ENCODE measurements at regions of chr4 and their contacts with region 1.

Region 1: GRCh38 chr4:41257257-41257901 is 651 bp downstream of the UCHL1 start:
- DNase-seq: peak; percentile 85
- H3K4me3 ChIP-seq: peak overlapping the region; percentile 77 to 97
- H3K27ac ChIP-seq: peak overlapping the region; percentile 73 to 95; a peak in 3 of 4 replicates
- H3K4me1 ChIP-seq: peaks cover 10 to 16% of the 10 kb centered on the region in 2 experiments; a peak in 3 of 4 replicates
- H3K27me3 ChIP-seq: no peaks in the 10 kb centered on the region
- CTCF ChIP-seq: no peak
- EP300 ChIP-seq: no peak
- RAD21 ChIP-seq: no peak

Region 2: GRCh38 chr4:40924096-40924792 is 333.1 kb before region 1 on chr4:
- CTCF ChIA-PET with region 1: interaction called, 12 read pairs
- POLR2A ChIA-PET with region 1: interaction called, 3 read pairs
- DNase-seq: peak; percentile 83
- H3K4me3 ChIP-seq: peak overlapping the region in 1 of 2 experiments; percentile 10; a peak in 1 of 4 replicates
- H3K27ac ChIP-seq: no peak overlapping the region
- H3K4me1 ChIP-seq: no peaks in the 10 kb centered on the region; a peak in 1 of 4 replicates
- H3K27me3 ChIP-seq: no peaks in the 10 kb centered on the region
- CTCF ChIP-seq: peak; percentile 94
- EP300 ChIP-seq: no peak
- RAD21 ChIP-seq: peak; percentile 79

Region 3: GRCh38 chr4:41245983-41246382 is 11.4 kb before region 1 on chr4:
- CTCF ChIA-PET with region 1: interaction called, 6 read pairs
- POLR2A ChIA-PET with region 1: interaction called, 16 read pairs
- DNase-seq: no peak
- H3K4me3 ChIP-seq: no peak overlapping the region
- H3K27ac ChIP-seq: no peak overlapping the region
- H3K4me1 ChIP-seq: no peaks in the 10 kb centered on the region
- H3K27me3 ChIP-seq: no peaks in the 10 kb centered on the region
- CTCF ChIP-seq: no peak
- EP300 ChIP-seq: no peak
- RAD21 ChIP-seq: no peak

Region 4: GRCh38 chr4:41281038-41281634 is 23.8 kb after region 1 on chr4:
- CTCF ChIA-PET with region 1: interaction called, 25 read pairs
- POLR2A ChIA-PET with region 1: no interaction called
- DNase-seq: peak; percentile 84
- H3K4me3 ChIP-seq: no peak overlapping the region
- H3K27ac ChIP-seq: no peak overlapping the region
- H3K4me1 ChIP-seq: no peaks in the 10 kb centered on the region; a peak in 1 of 4 replicates
- H3K27me3 ChIP-seq: no peaks in the 10 kb centered on the region
- CTCF ChIP-seq: peak; percentile 90
- EP300 ChIP-seq: no peak
- RAD21 ChIP-seq: peak; percentile 100

Region 5: GRCh38 chr4:41406113-41406516 is 148.7 kb after region 1 on chr4:
- CTCF ChIA-PET with region 1: no interaction called
- POLR2A ChIA-PET with region 1: no interaction called
- DNase-seq: no peak
- H3K4me3 ChIP-seq: no peak overlapping the region
- H3K27ac ChIP-seq: no peak overlapping the region
- H3K4me1 ChIP-seq: no peaks in the 10 kb centered on the region; a peak in 1 of 4 replicates
- H3K27me3 ChIP-seq: no peaks in the 10 kb centered on the region
- CTCF ChIP-seq: no peak
- EP300 ChIP-seq: no peak
- RAD21 ChIP-seq: no peak

Region 6: DNA sequence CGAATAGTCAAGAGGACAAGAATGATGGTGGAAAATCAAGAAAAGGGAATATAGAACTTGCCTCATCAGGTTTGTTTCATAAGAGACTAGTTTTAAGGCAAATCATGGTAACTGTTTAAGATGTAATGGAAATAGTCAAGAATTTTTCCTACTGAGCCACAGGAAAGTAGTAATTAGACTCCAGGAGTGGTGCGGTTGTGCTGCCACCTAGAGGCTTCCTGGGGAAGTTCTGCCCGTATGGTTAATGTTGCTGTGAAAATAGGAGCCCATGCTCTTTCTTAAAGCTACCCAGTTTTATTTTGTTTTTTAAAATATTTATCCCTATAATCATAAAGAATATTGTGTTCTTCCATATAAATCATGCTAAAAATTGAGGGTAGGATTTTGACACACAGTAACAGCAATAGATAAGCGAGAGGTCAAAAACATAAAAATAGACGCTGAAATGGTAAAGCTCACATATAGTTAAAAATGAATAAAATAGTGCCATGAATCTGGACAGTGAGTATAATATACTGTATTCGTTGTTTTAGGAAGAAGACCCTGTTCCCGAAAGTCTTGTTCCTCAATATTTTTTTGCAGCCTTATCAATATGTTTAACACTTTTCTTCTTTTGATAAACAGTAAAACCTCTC is 404.2 kb after region 1 on chr4:
- CTCF ChIA-PET with region 1: interaction called, 13 read pairs
- POLR2A ChIA-PET with region 1: interaction called, 3 read pairs
- DNase-seq: peak; percentile 56
- H3K4me3 ChIP-seq: no peak overlapping the region; a peak in 1 of 4 replicates
- H3K27ac ChIP-seq: no peak overlapping the region
- H3K4me1 ChIP-seq: peaks cover 0 to 3% of the 10 kb centered on the region in 2 experiments; a peak in 1 of 4 replicates
- H3K27me3 ChIP-seq: no peaks in the 10 kb centered on the region
- CTCF ChIP-seq: peak; percentile 98
- EP300 ChIP-seq: no peak
- RAD21 ChIP-seq: peak; percentile 97